ENCODE measurements at regions of chr2 and their contacts with region 1.

Region 1: DNA sequence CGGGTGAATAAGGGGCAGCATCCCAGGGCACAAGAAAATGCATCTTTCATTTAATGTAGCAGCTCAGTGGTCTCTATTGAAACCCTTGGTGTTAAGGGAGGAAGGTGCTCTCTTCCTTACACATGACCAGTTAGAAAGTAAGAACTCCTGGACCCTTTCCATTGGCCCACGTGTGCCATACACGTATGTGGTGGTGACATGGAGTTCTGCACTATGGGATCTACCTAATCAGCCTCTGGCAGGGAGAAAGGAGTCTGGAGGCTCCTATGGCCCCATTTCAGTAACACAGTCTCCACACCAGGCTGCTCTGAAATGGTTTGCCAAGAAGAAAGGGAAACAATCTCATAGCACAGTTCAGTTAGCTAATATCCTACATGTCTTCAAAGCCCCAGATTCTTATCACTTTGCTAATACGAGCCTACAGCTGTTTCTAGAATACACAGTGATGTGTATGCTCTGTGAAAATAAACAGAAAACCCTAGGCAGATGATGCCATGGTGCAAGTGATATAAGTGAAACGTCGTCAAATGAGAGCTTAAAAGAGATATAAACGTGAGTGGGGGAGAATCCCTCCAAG is 7.0 kb downstream of the EFEMP1 start:
- DNase-seq: peak; percentile 93
- ATAC-seq: peak; percentile 86
- H3K4me3 ChIP-seq: no peak overlapping the region
- H3K27ac ChIP-seq: peak overlapping the region; percentile 89
- H3K4me1 ChIP-seq: peaks cover 8% of the 10 kb centered on the region
- H3K27me3 ChIP-seq: no peaks in the 10 kb centered on the region
- CTCF ChIP-seq: no peak
- POLR2A ChIP-seq: no peak
- RAD21 ChIP-seq: no peak

Region 2: GRCh38 chr2:55843096-55843993 is 73.2 kb before region 1 on chr2:
- CTCF ChIA-PET with region 1: no interaction called
- POLR2A ChIA-PET with region 1: no interaction called
- dilution Hi-C with region 1: no loop called
- in situ Hi-C with region 1: no loop called
- intact Hi-C with region 1: loop called (anchors 2 kb)
- DNase-seq: peak; percentile 99
- ATAC-seq: peak; percentile 85
- H3K4me3 ChIP-seq: no peak overlapping the region
- H3K27ac ChIP-seq: peak overlapping the region; percentile 71
- H3K4me1 ChIP-seq: peaks cover 24% of the 10 kb centered on the region
- H3K27me3 ChIP-seq: no peaks in the 10 kb centered on the region
- CTCF ChIP-seq: no peak
- POLR2A ChIP-seq: peak; percentile 70
- RAD21 ChIP-seq: no peak; the same call in 1 of the 2 replicates

Region 3: GRCh38 chr2:55901325-55901724 is 15.2 kb before region 1 on chr2:
- CTCF ChIA-PET with region 1: no interaction called
- POLR2A ChIA-PET with region 1: no interaction called
- dilution Hi-C with region 1: no loop called
- in situ Hi-C with region 1: no loop called
- intact Hi-C with region 1: loop called (anchors 2 kb)
- DNase-seq: peak; percentile 53
- ATAC-seq: peak; percentile 83
- H3K4me3 ChIP-seq: no peak overlapping the region
- H3K27ac ChIP-seq: no peak overlapping the region
- H3K4me1 ChIP-seq: peaks cover 8% of the 10 kb centered on the region
- H3K27me3 ChIP-seq: no peaks in the 10 kb centered on the region
- CTCF ChIP-seq: no peak
- POLR2A ChIP-seq: no peak
- RAD21 ChIP-seq: no peak

Measured in IMR-90 (cell line).